Activated CD8-positive, alpha-beta memory T cell treated with anti-CD3 and anti-CD28 coated beads, Interleukin-2, amount 10 ng/mL, durations not matched to agents 7 days and 5 days (primary cell): ENCODE measurements at regions of chr14 and their contacts with region 1.

Region 1: GRCh38 chr14:36070031-36070719 is 106.3 kb downstream of the PTCSC3 start:
- DNase-seq: peak; percentile 59
- ATAC-seq: no peak
- H3K4me3 Mint-ChIP-seq: no peak overlapping the region
- H3K27ac Mint-ChIP-seq: no peak overlapping the region
- H3K4me1 Mint-ChIP-seq: no peaks in the 10 kb centered on the region
- H3K27me3 Mint-ChIP-seq: peaks cover 34% of the 10 kb centered on the region

Region 2: DNA sequence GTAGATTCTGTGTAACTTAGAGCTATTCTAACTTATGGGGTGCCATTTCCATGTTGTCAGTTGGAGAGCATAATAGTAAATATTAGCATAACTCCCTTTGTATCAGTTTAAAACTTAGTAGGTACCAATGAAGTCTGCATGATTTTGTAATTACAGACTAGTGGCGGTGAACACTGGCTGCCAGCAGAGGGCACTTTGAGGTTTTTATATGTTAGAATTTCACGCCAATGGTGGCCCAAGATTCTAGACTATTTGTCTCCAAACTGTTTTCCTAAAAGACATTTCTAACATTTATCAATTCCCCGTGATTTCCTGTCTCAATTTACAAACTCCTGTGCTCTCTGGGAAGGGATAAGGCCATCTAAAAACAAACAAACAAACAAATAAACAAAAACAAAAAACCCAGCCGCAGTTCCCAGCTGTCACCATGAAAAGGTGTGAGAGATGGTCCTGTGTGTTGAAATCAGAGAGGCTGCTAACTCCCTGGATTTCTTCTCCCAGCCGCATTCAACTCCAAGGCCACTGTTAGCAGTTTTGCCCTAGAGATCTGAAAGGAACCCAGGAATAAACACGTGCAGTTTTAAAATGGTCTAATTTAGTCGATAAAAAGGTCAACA is 186.4 kb before region 1 on chr14:
- CTCF ChIA-PET with region 1: interaction called, 51 read pairs
- DNase-seq: peak; percentile 45
- ATAC-seq: peak; percentile 42
- H3K4me3 Mint-ChIP-seq: no peak overlapping the region
- H3K27ac Mint-ChIP-seq: no peak overlapping the region
- H3K4me1 Mint-ChIP-seq: peaks cover 5% of the 10 kb centered on the region
- H3K27me3 Mint-ChIP-seq: peaks cover 14% of the 10 kb centered on the region

Region 3: DNA sequence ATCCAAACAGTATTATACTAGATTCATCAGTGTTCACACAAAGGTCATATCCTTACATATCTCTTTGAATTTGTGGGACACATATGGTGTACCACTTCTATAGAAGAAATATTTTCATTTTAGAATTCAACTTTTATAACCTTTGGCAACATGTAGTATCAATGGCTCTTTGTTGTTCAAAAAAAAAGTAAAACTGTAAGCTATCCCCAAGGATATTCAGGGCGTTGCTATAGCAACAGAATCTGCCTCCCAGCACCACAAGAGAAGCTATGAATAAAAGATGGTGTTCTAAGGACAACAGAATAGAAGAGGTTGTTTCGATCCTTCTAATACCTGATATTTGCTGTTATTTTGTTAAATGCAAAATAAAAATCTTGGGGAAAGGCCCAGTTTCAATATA is 104.8 kb before region 1 on chr14:
- CTCF ChIA-PET with region 1: interaction called, 10 read pairs
- DNase-seq: no peak
- ATAC-seq: no peak
- H3K4me3 Mint-ChIP-seq: no peak overlapping the region
- H3K27ac Mint-ChIP-seq: no peak overlapping the region
- H3K4me1 Mint-ChIP-seq: no peaks in the 10 kb centered on the region
- H3K27me3 Mint-ChIP-seq: peaks cover 10% of the 10 kb centered on the region

Region 4: DNA sequence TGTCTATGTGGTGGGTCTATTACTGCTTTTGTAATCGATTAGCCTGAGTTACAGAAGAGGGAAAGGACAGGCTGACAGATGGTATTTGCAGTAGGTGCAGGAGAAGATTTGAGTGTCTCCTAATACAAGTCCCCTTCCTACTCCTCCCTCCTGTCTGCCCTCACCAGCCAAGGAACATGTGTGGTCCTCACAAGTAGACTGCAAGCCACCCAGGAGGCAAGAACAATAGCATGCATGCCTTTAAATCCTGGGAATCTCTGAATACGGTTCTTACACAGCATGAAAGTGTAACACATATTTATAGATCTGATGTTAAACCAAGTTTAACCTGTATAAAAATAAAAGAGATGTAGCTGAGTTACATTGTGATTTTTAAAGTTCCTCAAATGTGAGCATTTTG is 10.6 kb before region 1 on chr14:
- CTCF ChIA-PET with region 1: interaction called, 18 read pairs
- DNase-seq: no peak
- ATAC-seq: no peak
- H3K4me3 Mint-ChIP-seq: no peak overlapping the region
- H3K27ac Mint-ChIP-seq: no peak overlapping the region
- H3K4me1 Mint-ChIP-seq: no peaks in the 10 kb centered on the region
- H3K27me3 Mint-ChIP-seq: peaks cover 27% of the 10 kb centered on the region

Region 5: GRCh38 chr14:36373982-36374673 is 304.0 kb after region 1 on chr14:
- CTCF ChIA-PET with region 1: interaction called, 48 read pairs
- DNase-seq: peak; percentile 79
- ATAC-seq: peak; percentile 78
- H3K4me3 Mint-ChIP-seq: no peak overlapping the region
- H3K27ac Mint-ChIP-seq: no peak overlapping the region
- H3K4me1 Mint-ChIP-seq: no peaks in the 10 kb centered on the region
- H3K27me3 Mint-ChIP-seq: peaks cover 9% of the 10 kb centered on the region